G401 (cell line): ENCODE measurements at regions of chr1 and their contacts with region 1.

Region 1: GRCh38 chr1:15584489-15585363 is at the start of gene AGMAT:
- DNase-seq: no peak
- total RNA-seq, gene AGMAT: 2.0 and 2.6 TPM in 2 replicates

Region 2: GRCh38 chr1:15741183-15741850 is 156.6 kb after region 1 on chr1:
- in situ Hi-C with region 1: loop called (anchors 25 kb)
- DNase-seq: peak; percentile 93